Aorta (tissue), 5 donors: ENCODE measurements at regions of chr11 and their contacts with region 1.

Region 1: DNA sequence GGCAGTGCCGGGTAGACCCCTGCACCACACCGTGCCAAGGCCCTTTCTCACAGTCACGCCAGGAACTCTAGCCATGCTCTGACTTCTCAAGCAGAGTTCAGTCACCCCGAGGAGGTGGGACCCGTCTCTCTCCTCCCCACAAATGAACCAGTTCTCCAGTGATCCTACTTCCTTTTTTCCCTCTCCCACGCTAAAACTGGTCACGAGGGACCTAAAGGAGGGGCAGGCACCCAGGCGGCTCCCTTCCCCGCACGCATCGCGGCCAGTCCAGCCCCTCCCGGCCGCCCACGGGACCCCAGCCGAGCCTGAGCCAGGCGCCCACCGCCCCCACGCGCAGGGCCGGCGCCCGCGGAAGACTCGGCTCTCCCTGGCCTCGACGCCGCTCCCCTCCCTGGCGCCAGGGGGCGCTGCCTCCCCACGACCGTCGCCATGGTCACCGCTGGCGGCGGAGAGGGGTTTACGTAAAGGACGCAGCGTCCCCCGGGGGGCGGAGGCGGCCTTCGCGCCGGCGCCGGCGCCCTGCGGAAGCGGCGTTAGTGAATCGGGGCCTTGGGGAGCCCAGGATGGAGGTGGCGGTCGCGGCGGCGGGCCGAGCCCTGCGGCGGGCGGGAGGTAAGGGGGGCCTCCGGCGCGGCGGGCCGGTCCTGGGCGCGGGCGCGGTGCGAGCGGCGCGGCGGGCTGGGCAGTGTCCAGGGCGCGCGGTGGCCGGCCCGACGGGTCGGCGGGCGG is at the start of gene DAGLA:
- DNase-seq: peak; percentile 76 to 91
- ATAC-seq: peak; percentile 88
- H3K4me3 ChIP-seq: peak within 1 kb of the TSS; percentile 13 to 34
- H3K27ac ChIP-seq: no peak within 1 kb of the TSS
- H3K4me1 ChIP-seq: no peaks in the 10 kb centered on the region
- H3K27me3 ChIP-seq: peaks cover 0 to 4% of the 10 kb centered on the region in 2 donors
- total RNA-seq, gene DAGLA: 1.4 to 3.5 TPM

Region 2: GRCh38 chr11:61733120-61733978 is 53.3 kb after region 1 on chr11:
- intact Hi-C with region 1: loop called (anchors 1 to 2 kb)
- DNase-seq: peak; percentile 92 to 96
- ATAC-seq: peak; percentile 91
- H3K4me3 ChIP-seq: no peak overlapping the region
- H3K27ac ChIP-seq: peak overlapping the region in 1 of 2 donors; percentile 38
- H3K4me1 ChIP-seq: no peaks in the 10 kb centered on the region
- H3K27me3 ChIP-seq: no peaks in the 10 kb centered on the region